Psoas muscle (tissue), 8 donors: ENCODE measurements at regions of chr17 and their contacts with region 1.

Region 1: GRCh38 chr17:35119368-35120165 is at the start of gene RAD51D:
- DNase-seq: peak; percentile 74 to 87
- ATAC-seq: peak; percentile 97 to 99 (median 98)
- H3K4me3 ChIP-seq: peak within 1 kb of the TSS; percentile 93
- H3K27ac ChIP-seq: peak within 1 kb of the TSS; percentile 62
- H3K4me1 ChIP-seq: peaks cover 14% of the 10 kb centered on the region
- H3K27me3 ChIP-seq: no peaks in the 10 kb centered on the region
- CTCF ChIP-seq: peak; percentile 89
- total RNA-seq, gene RAD51D: 4.0 to 6.2 (median 6.0) TPM

Region 2: GRCh38 chr17:34420254-34420766 is 699.3 kb before region 1 on chr17:
- intact Hi-C with region 1: loop called (anchors 1 to 5 kb)
- DNase-seq: peak in 1 of 2 donors; percentile 24
- ATAC-seq: peak in 3 of 4 donors; percentile 61 to 76 (median 70)
- H3K4me3 ChIP-seq: no peak overlapping the region
- H3K27ac ChIP-seq: no peak overlapping the region
- H3K4me1 ChIP-seq: no peaks in the 10 kb centered on the region
- H3K27me3 ChIP-seq: peaks cover 3 to 31% (median 7%) of the 10 kb centered on the region in 3 donors
- CTCF ChIP-seq: peak; percentile 99

Region 3: GRCh38 chr17:34542700-34543336 is 576.7 kb before region 1 on chr17:
- intact Hi-C with region 1: loop called (anchors 2 to 5 kb)
- DNase-seq: peak in 1 of 2 donors; percentile 24
- ATAC-seq: no peak
- H3K4me3 ChIP-seq: no peak overlapping the region
- H3K27ac ChIP-seq: no peak overlapping the region
- H3K4me1 ChIP-seq: no peaks in the 10 kb centered on the region
- H3K27me3 ChIP-seq: peaks cover 0 to 18% (median 0%) of the 10 kb centered on the region in 3 donors
- CTCF ChIP-seq: peak; percentile 78

Region 4: DNA sequence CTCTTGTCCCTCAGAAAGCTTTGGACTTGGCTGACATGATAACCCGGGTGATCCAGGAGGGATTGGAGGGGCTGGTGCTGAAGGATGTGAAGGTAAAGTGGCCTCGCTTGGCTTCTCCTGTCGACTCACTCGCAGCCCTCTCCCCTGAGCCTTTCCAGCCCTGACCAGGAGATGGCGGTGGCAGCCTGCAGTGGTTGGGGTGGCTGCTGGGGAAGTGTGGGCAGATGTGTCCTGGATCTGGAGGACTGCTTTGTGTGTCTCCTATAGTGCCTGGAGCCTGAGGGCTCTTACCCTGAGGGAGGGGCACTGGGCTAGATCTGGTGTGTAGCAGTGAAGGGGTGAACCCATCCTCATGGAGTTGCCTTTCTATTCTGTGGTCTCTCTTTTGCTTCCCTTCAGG is 121.4 kb before region 1 on chr17:
- intact Hi-C with region 1: loop called (anchors 5 kb)
- DNase-seq: peak; percentile 68 to 79
- ATAC-seq: peak; percentile 82 to 95 (median 88)
- H3K4me3 ChIP-seq: no peak overlapping the region
- H3K27ac ChIP-seq: peak overlapping the region; percentile 39
- H3K4me1 ChIP-seq: peaks cover 5% of the 10 kb centered on the region
- H3K27me3 ChIP-seq: no peaks in the 10 kb centered on the region
- CTCF ChIP-seq: peak; percentile 66

Region 5: GRCh38 chr17:35141681-35142466 is 22.3 kb after region 1 on chr17 and contains the start of gene NLE1:
- intact Hi-C with region 1: loop called in 1 of 2 experiments (anchors 1 kb)
- DNase-seq: peak; percentile 83 to 92
- ATAC-seq: peak; percentile 89 to 96 (median 94)
- H3K4me3 ChIP-seq: peak within 1 kb of the TSS; percentile 85
- H3K27ac ChIP-seq: peak within 1 kb of the TSS; percentile 67
- H3K4me1 ChIP-seq: peaks cover 22% of the 10 kb centered on the region
- H3K27me3 ChIP-seq: no peaks in the 10 kb centered on the region
- CTCF ChIP-seq: peak; percentile 90
- total RNA-seq, gene NLE1: 9.8 to 11.9 (median 10.2) TPM

Region 6: GRCh38 chr17:35476283-35476820 is 356.8 kb after region 1 on chr17:
- intact Hi-C with region 1: no loop called
- DNase-seq: no peak
- ATAC-seq: no peak
- H3K4me3 ChIP-seq: no peak overlapping the region
- H3K27ac ChIP-seq: no peak overlapping the region
- H3K4me1 ChIP-seq: no peaks in the 10 kb centered on the region
- H3K27me3 ChIP-seq: peaks cover 0 to 22% (median 0%) of the 10 kb centered on the region in 3 donors
- CTCF ChIP-seq: no peak